Brain microvascular endothelial cell (primary cell): ENCODE measurements at regions of chr13 and their contacts with region 1.

Region 1: GRCh38 chr13:114035583-114036531 is 62.0 kb upstream of the C13orf46 start:
- DNase-seq: peak; percentile 48
- H3K4me3 ChIP-seq: no peak overlapping the region
- H3K27ac ChIP-seq: peak overlapping the region; percentile 9
- H3K27me3 ChIP-seq: no peaks in the 10 kb centered on the region
- CTCF ChIP-seq: no peak

Region 2: GRCh38 chr13:114099191-114099590 is 63.3 kb after region 1 on chr13:
- in situ Hi-C with region 1: loop called (anchors 10 kb)
- DNase-seq: peak; percentile 94
- H3K4me3 ChIP-seq: no peak overlapping the region
- H3K27ac ChIP-seq: peak overlapping the region; percentile 27
- H3K27me3 ChIP-seq: no peaks in the 10 kb centered on the region
- CTCF ChIP-seq: no peak